ENCODE measurements at regions of chr20 and their contacts with region 1.

Region 1: GRCh38 chr20:21099751-21100577 is 6.2 kb downstream of the LINC00237 start:
- DNase-seq: peak in 5 of 9 donors; percentile 32 to 54 (median 40)
- ATAC-seq: peak; percentile 64
- H3K4me3 ChIP-seq: peak overlapping the region; percentile 51
- H3K4me3 Mint-ChIP-seq: peak overlapping the region; percentile 78 to 91 (median 84)
- H3K27ac ChIP-seq: no peak overlapping the region
- H3K27ac Mint-ChIP-seq: peak overlapping the region in 5 of 9 donors; percentile 18 to 90 (median 38)
- H3K4me1 ChIP-seq: peaks cover 20 to 34% of the 10 kb centered on the region in 2 donors
- H3K4me1 Mint-ChIP-seq: peaks cover 16 to 50% (median 45%) of the 10 kb centered on the region in 7 donors
- H3K27me3 ChIP-seq: peaks cover 18 to 59% of the 10 kb centered on the region in 2 donors
- H3K27me3 Mint-ChIP-seq: peaks cover 76 to 93% (median 90%) of the 10 kb centered on the region in 5 donors

Region 2: DNA sequence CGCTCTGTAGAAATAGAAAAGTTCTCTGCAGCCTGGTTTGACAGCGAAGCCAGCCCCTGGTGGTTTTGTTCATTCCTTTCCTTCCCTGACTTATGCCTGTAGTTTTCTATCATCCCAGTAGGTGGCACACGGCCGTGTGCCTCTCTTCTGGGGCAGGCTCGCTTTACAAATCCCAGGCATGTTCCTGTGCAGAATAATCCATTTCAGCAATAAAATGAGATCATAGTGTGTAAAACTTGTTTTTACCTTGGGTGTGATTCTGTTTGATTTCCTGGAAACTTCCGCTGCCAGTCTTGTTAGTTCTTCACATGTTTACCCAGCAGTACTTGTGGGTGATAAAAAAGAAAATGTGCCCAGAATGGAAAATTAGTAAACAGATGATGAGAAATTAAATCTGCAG is 739.5 kb before region 1 on chr20:
- CTCF ChIA-PET with region 1: no interaction called
- POLR2A ChIA-PET with region 1: no interaction called
- intact Hi-C with region 1: loop called in 1 of 2 experiments (anchors 2 kb)
- DNase-seq: peak in 2 of 9 donors; percentile 5 to 26
- ATAC-seq: peak; percentile 72
- H3K4me3 ChIP-seq: no peak overlapping the region
- H3K4me3 Mint-ChIP-seq: peak overlapping the region in 7 of 10 donors; percentile 27 to 72 (median 55)
- H3K27ac ChIP-seq: no peak overlapping the region
- H3K27ac Mint-ChIP-seq: peak overlapping the region in 1 of 9 donors; percentile 0
- H3K4me1 ChIP-seq: peaks cover 0 to 10% of the 10 kb centered on the region in 2 donors
- H3K4me1 Mint-ChIP-seq: peaks cover 0 to 31% (median 24%) of the 10 kb centered on the region in 7 donors
- H3K27me3 ChIP-seq: no peaks in the 10 kb centered on the region
- H3K27me3 Mint-ChIP-seq: peaks cover 42 to 56% (median 51%) of the 10 kb centered on the region in 5 donors

Region 3: DNA sequence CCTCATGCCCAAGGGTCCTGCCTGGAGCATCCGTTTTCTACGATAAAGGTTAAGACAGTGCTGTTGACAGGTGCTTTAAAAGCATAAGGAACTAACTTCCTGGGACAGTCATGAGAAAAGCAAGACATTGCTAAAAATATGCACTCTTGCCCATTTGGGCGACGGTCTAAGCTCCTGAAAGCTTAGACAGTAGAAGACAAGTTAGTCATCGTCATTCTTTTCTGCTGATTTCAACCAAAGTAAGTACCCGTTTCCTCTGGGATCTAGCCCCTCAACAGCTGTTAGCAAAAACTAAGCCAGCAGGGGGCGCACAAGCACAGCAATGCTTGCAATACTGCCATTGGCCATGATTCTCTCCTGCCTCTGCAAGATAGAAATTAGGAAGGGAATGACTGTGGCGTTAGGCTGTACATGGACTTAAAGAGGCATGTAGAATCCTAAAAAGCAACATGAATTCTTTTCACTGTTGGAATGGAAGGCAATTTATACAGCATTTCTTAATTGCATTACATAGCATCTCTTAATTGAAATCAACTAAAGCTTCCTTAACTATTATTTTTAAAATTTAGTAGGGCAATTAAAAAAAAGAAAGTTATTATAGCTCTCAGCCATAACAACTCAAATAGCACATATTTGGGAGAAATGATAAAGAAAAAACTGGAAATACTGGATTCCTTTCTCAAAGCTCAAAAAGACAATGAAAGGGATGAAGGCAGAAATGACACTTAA is 239.7 kb before region 1 on chr20:
- CTCF ChIA-PET with region 1: no interaction called
- POLR2A ChIA-PET with region 1: no interaction called
- intact Hi-C with region 1: loop called in 1 of 2 experiments (anchors 2 kb)
- DNase-seq: peak; percentile 44 to 80 (median 64)
- ATAC-seq: peak; percentile 81
- H3K4me3 ChIP-seq: no peak overlapping the region
- H3K4me3 Mint-ChIP-seq: no peak overlapping the region
- H3K27ac ChIP-seq: no peak overlapping the region
- H3K27ac Mint-ChIP-seq: no peak overlapping the region
- H3K4me1 ChIP-seq: no peaks in the 10 kb centered on the region
- H3K4me1 Mint-ChIP-seq: peaks cover 0 to 1% (median 0%) of the 10 kb centered on the region in 7 donors
- H3K27me3 ChIP-seq: no peaks in the 10 kb centered on the region
- H3K27me3 Mint-ChIP-seq: peaks cover 13 to 38% (median 31%) of the 10 kb centered on the region in 5 donors

Region 4: GRCh38 chr20:20946122-20946759 is 153.7 kb before region 1 on chr20:
- CTCF ChIA-PET with region 1: no interaction called
- POLR2A ChIA-PET with region 1: no interaction called
- intact Hi-C with region 1: no loop called
- DNase-seq: no peak
- ATAC-seq: no peak
- H3K4me3 ChIP-seq: no peak overlapping the region
- H3K4me3 Mint-ChIP-seq: no peak overlapping the region
- H3K27ac ChIP-seq: no peak overlapping the region
- H3K27ac Mint-ChIP-seq: no peak overlapping the region
- H3K4me1 ChIP-seq: no peaks in the 10 kb centered on the region
- H3K4me1 Mint-ChIP-seq: no peaks in the 10 kb centered on the region
- H3K27me3 ChIP-seq: no peaks in the 10 kb centered on the region
- H3K27me3 Mint-ChIP-seq: peaks cover 0 to 27% (median 17%) of the 10 kb centered on the region in 5 donors

Region 5: GRCh38 chr20:21125849-21126580 is 26.1 kb after region 1 on chr20 and contains the start of gene KIZ:
- CTCF ChIA-PET with region 1: interaction called, 3 read pairs
- POLR2A ChIA-PET with region 1: interaction called, 6 read pairs
- intact Hi-C with region 1: loop called (anchors 1 kb)
- DNase-seq: peak; percentile 93 to 100 (median 97)
- ATAC-seq: peak; percentile 100
- H3K4me3 ChIP-seq: peak within 1 kb of the TSS; percentile 56
- H3K4me3 Mint-ChIP-seq: peak within 1 kb of the TSS; percentile 86 to 98 (median 90)
- H3K27ac ChIP-seq: peak within 1 kb of the TSS; percentile 77
- H3K27ac Mint-ChIP-seq: peak within 1 kb of the TSS; percentile 70 to 97 (median 88)
- H3K4me1 ChIP-seq: peaks cover 10 to 16% of the 10 kb centered on the region in 2 donors
- H3K4me1 Mint-ChIP-seq: peaks cover 11 to 35% (median 21%) of the 10 kb centered on the region in 7 donors
- H3K27me3 ChIP-seq: no peaks in the 10 kb centered on the region
- H3K27me3 Mint-ChIP-seq: peaks cover 0 to 4% (median 0%) of the 10 kb centered on the region in 5 donors
- total RNA-seq, gene KIZ: 15.6 to 47.4 (median 32.5) TPM

Region 6: DNA sequence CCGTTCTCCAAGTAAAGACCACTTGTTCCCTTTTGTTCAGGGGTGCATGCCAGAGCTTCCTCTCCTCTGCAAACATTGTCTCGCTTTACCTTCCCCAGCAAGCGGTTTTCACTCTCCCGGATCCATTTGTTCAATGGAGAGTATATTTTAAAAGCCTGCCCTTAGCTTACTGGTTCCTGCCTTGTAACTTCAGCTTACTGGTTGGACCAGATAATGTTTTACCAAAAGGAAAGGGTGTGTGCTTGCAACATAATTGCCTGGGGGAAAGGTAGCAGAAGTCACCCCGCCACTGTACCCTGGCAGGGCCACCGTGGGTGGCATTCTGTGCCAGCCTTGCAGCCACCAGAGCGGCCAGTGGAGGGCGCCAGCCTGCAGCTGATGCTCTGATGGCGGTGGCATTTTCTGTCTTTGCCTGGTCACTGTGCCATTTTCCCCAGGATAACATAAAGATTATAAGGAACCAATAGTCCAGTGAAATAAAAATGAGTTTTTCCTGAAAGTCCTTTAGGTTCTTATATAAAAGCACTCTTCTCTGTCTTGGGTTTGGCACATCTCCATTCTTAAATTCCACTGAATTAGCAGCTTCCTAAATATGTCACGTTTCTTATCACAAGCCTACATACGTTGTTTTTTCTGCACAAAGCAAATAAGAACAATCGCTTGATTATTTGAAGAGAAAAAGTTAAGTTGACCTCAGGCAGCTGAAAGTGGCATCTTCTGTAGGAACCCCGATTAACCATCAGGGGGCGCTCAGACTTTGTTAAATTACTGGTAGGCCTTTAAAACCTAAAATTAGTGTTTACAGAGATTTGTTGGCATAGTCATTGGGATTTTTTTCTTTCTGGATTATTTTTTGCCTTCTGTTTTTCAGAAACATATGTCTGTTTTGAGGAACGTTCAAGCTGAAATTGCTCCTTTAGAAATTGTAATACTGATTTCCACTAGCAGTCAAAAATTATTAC is 135.8 kb after region 1 on chr20:
- CTCF ChIA-PET with region 1: no interaction called
- POLR2A ChIA-PET with region 1: no interaction called
- intact Hi-C with region 1: loop called in 1 of 2 experiments (anchors 5 kb)
- DNase-seq: peak; percentile 24 to 69 (median 65)
- ATAC-seq: peak; percentile 84
- H3K4me3 ChIP-seq: no peak overlapping the region
- H3K4me3 Mint-ChIP-seq: no peak overlapping the region
- H3K27ac ChIP-seq: no peak overlapping the region
- H3K27ac Mint-ChIP-seq: no peak overlapping the region
- H3K4me1 ChIP-seq: no peaks in the 10 kb centered on the region
- H3K4me1 Mint-ChIP-seq: peaks cover 0 to 6% (median 4%) of the 10 kb centered on the region in 7 donors
- H3K27me3 ChIP-seq: no peaks in the 10 kb centered on the region
- H3K27me3 Mint-ChIP-seq: no peaks in the 10 kb centered on the region

Region 7: GRCh38 chr20:21395666-21396598 is 296.0 kb after region 1 on chr20:
- CTCF ChIA-PET with region 1: no interaction called
- POLR2A ChIA-PET with region 1: no interaction called
- intact Hi-C with region 1: loop called in 1 of 2 experiments (anchors 2 kb)
- DNase-seq: peak; percentile 21 to 77 (median 67)
- ATAC-seq: peak; percentile 86
- H3K4me3 ChIP-seq: no peak overlapping the region
- H3K4me3 Mint-ChIP-seq: peak overlapping the region; percentile 39 to 85 (median 76)
- H3K27ac ChIP-seq: no peak overlapping the region
- H3K27ac Mint-ChIP-seq: peak overlapping the region in 6 of 9 donors; percentile 16 to 76 (median 60)
- H3K4me1 ChIP-seq: peaks cover 0 to 16% of the 10 kb centered on the region in 2 donors
- H3K4me1 Mint-ChIP-seq: peaks cover 11 to 37% (median 30%) of the 10 kb centered on the region in 7 donors
- H3K27me3 ChIP-seq: peaks cover 43 to 63% of the 10 kb centered on the region in 2 donors
- H3K27me3 Mint-ChIP-seq: peaks cover 63 to 80% (median 75%) of the 10 kb centered on the region in 5 donors

Region 8: DNA sequence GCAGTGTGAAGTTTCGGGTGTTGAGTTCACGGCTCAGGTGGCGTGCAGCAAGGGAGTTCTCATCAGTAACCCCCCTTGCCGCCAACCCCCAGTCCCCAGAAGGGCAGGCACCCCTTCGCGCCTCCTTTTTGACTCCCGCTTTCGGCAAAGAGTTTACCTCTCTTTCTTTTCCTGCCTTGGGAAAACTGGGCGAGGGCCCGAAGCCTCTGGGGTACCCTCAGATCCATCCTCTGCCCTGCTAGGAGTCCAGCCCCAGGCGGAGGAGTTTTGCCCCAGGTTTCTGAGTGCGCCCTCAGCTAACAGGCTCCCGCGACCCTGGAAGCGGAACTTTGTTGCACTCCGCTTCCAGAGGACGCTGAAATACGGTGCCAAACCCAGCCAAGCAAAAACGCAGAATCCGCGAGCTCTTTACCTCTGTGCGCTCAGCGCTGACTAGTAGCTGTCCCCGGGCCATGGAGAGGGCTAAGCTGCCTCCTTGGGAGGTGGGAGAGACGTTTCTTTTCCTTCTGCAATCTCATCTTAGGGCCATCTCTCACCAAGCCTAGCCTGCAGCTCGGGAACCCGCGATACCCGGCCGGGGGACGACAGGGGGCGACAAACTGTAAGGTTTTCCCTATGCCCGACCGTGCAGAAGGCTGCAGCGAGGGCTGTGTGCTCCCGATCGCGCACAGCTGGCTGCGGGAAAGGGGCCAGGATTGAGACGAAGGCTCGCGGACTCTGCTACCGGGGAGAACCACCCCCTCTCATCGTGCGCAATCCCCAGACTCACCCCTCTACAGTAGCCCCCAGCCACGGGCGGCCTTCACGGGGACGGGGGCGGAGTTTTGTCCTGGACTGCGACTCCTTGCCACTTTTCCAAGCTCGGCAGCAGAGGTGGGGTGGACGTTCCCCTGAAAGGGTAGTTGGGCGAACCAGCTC is 602.8 kb after region 1 on chr20:
- CTCF ChIA-PET with region 1: no interaction called
- POLR2A ChIA-PET with region 1: no interaction called
- intact Hi-C with region 1: loop called in 1 of 2 experiments (anchors 5 kb)
- DNase-seq: no peak
- ATAC-seq: no peak
- H3K4me3 ChIP-seq: no peak overlapping the region
- H3K4me3 Mint-ChIP-seq: peak overlapping the region in 2 of 10 donors; percentile 6 to 34
- H3K27ac ChIP-seq: no peak overlapping the region
- H3K27ac Mint-ChIP-seq: peak overlapping the region in 1 of 9 donors; percentile 23
- H3K4me1 ChIP-seq: no peaks in the 10 kb centered on the region
- H3K4me1 Mint-ChIP-seq: peaks cover 0 to 19% (median 5%) of the 10 kb centered on the region in 7 donors
- H3K27me3 ChIP-seq: no peaks in the 10 kb centered on the region
- H3K27me3 Mint-ChIP-seq: peaks cover 66 to 93% (median 76%) of the 10 kb centered on the region in 5 donors

Measured in naive thymus-derived CD4-positive, alpha-beta T cell (primary cell).